Breast epithelium (tissue), 4 donors: ENCODE measurements at regions of chr10 and their contacts with region 1.

Region 1: GRCh38 chr10:33893506-33893905 is 559.0 kb upstream of the NRP1 start:
- DNase-seq: no peak
- H3K4me3 ChIP-seq: no peak overlapping the region
- H3K27ac ChIP-seq: no peak overlapping the region
- H3K4me1 ChIP-seq: no peaks in the 10 kb centered on the region
- H3K27me3 ChIP-seq: no peaks in the 10 kb centered on the region
- CTCF ChIP-seq: no peak
- POLR2A ChIP-seq: no peak

Region 2: GRCh38 chr10:33047655-33048054 is 845.9 kb before region 1 on chr10:
- intact Hi-C with region 1: no loop called
- DNase-seq: no peak
- H3K4me3 ChIP-seq: no peak overlapping the region
- H3K27ac ChIP-seq: no peak overlapping the region
- H3K4me1 ChIP-seq: no peaks in the 10 kb centered on the region
- H3K27me3 ChIP-seq: no peaks in the 10 kb centered on the region
- CTCF ChIP-seq: no peak
- POLR2A ChIP-seq: no peak

Region 3: GRCh38 chr10:33826186-33826585 is 67.3 kb before region 1 on chr10:
- intact Hi-C with region 1: loop called (anchors 2 kb)
- DNase-seq: no peak
- H3K4me3 ChIP-seq: no peak overlapping the region
- H3K27ac ChIP-seq: no peak overlapping the region
- H3K4me1 ChIP-seq: no peaks in the 10 kb centered on the region
- H3K27me3 ChIP-seq: no peaks in the 10 kb centered on the region
- CTCF ChIP-seq: no peak
- POLR2A ChIP-seq: no peak

Region 4: DNA sequence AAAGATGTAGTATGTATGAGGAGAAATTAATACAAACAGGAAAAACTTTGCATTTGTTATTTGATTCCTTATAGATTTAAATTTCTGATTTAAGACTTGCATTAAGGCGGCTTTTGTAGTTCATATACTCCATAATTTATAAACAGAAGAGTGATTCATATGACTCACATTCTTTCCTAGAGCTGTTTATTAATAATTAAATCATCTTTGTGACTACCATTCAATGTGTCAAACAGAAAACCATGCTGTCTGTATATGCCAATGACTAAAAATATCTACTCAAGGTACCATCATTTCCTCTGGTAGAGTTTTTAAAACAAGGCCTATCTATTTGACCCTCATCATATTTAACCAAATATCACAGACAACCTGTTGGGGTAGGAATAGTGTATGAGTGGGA is 419.8 kb after region 1 on chr10:
- intact Hi-C with region 1: no loop called
- DNase-seq: no peak
- H3K4me3 ChIP-seq: no peak overlapping the region
- H3K27ac ChIP-seq: no peak overlapping the region
- H3K4me1 ChIP-seq: no peaks in the 10 kb centered on the region
- H3K27me3 ChIP-seq: no peaks in the 10 kb centered on the region
- CTCF ChIP-seq: no peak
- POLR2A ChIP-seq: no peak